Common myeloid progenitor, CD34-positive (primary cell): ENCODE measurements at regions of chr1 and their contacts with region 1.

Region 1: DNA sequence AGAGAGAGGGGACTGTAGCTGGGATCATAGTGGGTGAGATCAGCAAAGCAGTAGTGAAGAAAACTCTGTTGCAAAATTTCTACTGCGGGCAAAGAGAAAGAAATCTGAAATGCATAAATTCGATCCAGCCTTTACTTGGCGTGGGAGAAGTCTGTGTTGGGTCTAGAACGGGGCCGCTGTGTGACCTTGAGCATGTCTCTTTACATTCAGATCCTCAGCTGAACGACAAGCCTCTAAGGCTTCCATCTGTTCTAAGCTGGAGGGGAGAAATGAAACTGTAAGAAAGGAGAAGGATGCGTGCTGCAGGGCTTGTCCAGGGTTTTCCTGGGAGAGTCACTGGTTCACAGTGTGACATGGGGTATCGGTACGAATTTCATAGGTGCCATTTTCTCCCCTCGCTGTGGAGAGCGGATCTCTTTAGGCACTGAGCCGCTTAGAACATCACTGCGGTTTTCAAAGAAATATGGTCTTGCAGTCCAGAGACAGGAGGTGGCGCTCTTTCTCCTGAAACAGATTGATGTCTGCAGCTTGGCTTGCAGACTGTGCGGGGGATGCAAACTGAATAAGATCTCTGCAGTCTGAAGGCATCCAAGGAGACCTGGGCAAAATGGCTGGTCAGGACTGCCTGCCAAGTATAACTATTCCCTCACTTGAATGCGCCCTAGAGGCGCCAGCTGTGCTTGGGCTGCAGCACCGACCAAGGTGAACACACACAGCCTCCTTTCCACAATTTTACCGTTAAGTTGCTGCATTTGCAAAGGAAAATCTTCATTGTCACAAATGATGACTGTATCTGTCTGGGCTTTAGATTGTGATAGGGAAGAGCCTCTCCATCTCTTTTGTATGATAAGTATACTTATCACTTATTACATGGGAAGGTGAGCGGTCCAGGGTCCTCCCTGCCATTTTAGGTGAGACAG is 104.1 kb downstream of the XCL2 start:
- DNase-seq: peak; percentile 90 to 96 (median 94)
- H3K4me3 ChIP-seq: peak overlapping the region in 5 of 7 experiments; percentile 19 to 69 (median 50)
- H3K27ac ChIP-seq: no peak overlapping the region
- H3K4me1 ChIP-seq: peaks cover 3 to 11% (median 4%) of the 10 kb centered on the region in 4 experiments
- H3K27me3 ChIP-seq: no peaks in the 10 kb centered on the region

Region 2: GRCh38 chr1:168110896-168111545 is 328.7 kb before region 1 on chr1:
- CTCF ChIA-PET with region 1: no interaction called
- POLR2A ChIA-PET with region 1: no interaction called
- DNase-seq: no peak
- H3K4me3 ChIP-seq: no peak overlapping the region
- H3K27ac ChIP-seq: no peak overlapping the region
- H3K4me1 ChIP-seq: no peaks in the 10 kb centered on the region
- H3K27me3 ChIP-seq: no peaks in the 10 kb centered on the region

Region 3: GRCh38 chr1:168414914-168415313 is 24.8 kb before region 1 on chr1:
- CTCF ChIA-PET with region 1: no interaction called
- POLR2A ChIA-PET with region 1: no interaction called
- DNase-seq: no peak
- H3K4me3 ChIP-seq: no peak overlapping the region
- H3K27ac ChIP-seq: no peak overlapping the region
- H3K4me1 ChIP-seq: no peaks in the 10 kb centered on the region
- H3K27me3 ChIP-seq: no peaks in the 10 kb centered on the region

Region 4: DNA sequence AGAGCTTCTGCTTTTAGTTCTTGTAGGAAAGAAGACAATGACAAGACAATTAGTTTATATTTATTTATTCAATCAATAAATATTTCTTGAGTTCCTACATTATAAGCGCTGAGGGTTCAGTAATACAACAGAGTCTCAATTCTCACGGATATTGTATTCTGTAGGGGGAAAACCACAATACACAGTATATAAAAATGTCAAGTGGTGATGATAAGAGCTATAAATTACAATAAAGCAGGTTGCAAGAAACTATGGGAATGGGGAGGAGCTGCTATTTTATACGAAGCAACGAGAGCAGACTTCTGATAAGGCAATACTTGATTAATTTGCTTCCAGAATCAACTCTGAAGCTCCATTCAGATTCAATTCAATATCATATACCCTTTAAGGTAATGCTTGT is 126.1 kb after region 1 on chr1:
- CTCF ChIA-PET with region 1: interaction called, 40 read pairs
- POLR2A ChIA-PET with region 1: no interaction called
- DNase-seq: peak in 2 of 3 donors; percentile 13 to 30
- H3K4me3 ChIP-seq: no peak overlapping the region
- H3K27ac ChIP-seq: no peak overlapping the region
- H3K4me1 ChIP-seq: peaks cover 9 to 21% (median 11%) of the 10 kb centered on the region in 4 experiments
- H3K27me3 ChIP-seq: no peaks in the 10 kb centered on the region

Region 5: GRCh38 chr1:168572633-168573032 is 132.9 kb after region 1 on chr1:
- CTCF ChIA-PET with region 1: interaction called, 40 read pairs
- POLR2A ChIA-PET with region 1: no interaction called
- DNase-seq: no peak
- H3K4me3 ChIP-seq: no peak overlapping the region
- H3K27ac ChIP-seq: no peak overlapping the region
- H3K4me1 ChIP-seq: no peaks in the 10 kb centered on the region
- H3K27me3 ChIP-seq: no peaks in the 10 kb centered on the region

Region 6: DNA sequence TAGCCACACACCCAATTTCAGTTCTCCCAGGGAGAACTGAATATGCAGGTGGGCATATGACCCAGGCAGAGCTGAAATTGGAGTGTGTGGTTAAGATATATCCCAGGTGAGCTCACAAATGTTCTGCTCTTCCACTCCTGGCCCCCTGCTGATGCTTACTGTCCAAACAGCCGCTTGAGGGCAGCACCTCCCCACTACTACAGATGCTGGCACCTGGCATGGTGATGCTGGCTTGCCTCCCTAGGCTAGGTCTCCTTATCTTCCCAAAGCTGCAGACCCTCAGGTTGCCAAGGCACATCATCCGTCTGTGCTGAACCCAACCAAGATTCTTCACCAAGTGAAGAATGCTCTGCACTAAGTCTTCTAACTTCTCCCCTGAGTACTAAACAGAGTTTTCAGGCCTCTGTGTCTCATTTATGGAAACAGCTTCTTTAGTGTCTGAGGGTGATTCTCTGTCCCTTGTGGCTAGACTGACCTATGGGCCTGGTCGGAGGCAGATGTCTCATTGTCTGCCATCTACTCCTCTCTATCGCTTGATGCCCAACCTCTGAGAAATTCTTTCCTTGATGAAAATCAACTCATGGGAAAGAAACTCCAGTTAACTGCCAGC is 163.9 kb after region 1 on chr1:
- CTCF ChIA-PET with region 1: interaction called, 16 read pairs
- POLR2A ChIA-PET with region 1: no interaction called
- DNase-seq: peak; percentile 68 to 81 (median 76)
- H3K4me3 ChIP-seq: no peak overlapping the region
- H3K27ac ChIP-seq: no peak overlapping the region
- H3K4me1 ChIP-seq: no peaks in the 10 kb centered on the region
- H3K27me3 ChIP-seq: no peaks in the 10 kb centered on the region

Region 7: GRCh38 chr1:168709405-168710305 is 269.9 kb after region 1 on chr1:
- CTCF ChIA-PET with region 1: no interaction called
- POLR2A ChIA-PET with region 1: no interaction called
- DNase-seq: peak in 2 of 3 donors; percentile 15 to 22
- H3K4me3 ChIP-seq: no peak overlapping the region
- H3K27ac ChIP-seq: no peak overlapping the region
- H3K4me1 ChIP-seq: no peaks in the 10 kb centered on the region
- H3K27me3 ChIP-seq: no peaks in the 10 kb centered on the region